WTC11 (cell line): ENCODE measurements at regions of chr2 and their contacts with region 1.

Region 1: GRCh38 chr2:200585730-200586643 is at the start of gene AOX1:
- DNase-seq: peak; percentile 77
- ATAC-seq: peak; percentile 86
- H3K4me3 Mint-ChIP-seq: peak within 1 kb of the TSS; percentile 83
- H3K27ac Mint-ChIP-seq: peak within 1 kb of the TSS; percentile 74; the same call in 1 of the 2 replicates
- H3K4me1 Mint-ChIP-seq: peaks cover 10% of the 10 kb centered on the region
- H3K27me3 Mint-ChIP-seq: peaks cover 24% of the 10 kb centered on the region
- CTCF ChIP-seq: no peak
- total RNA-seq, gene AOX1: 3.6 to 5.4 TPM (median 4.8 TPM) in 3 replicates

Region 2: GRCh38 chr2:200442471-200442870 is 143.5 kb before region 1 on chr2:
- CTCF ChIA-PET with region 1: no interaction called
- POLR2A ChIA-PET with region 1: no interaction called
- DNase-seq: no peak
- ATAC-seq: no peak
- H3K4me3 Mint-ChIP-seq: no peak overlapping the region
- H3K27ac Mint-ChIP-seq: no peak overlapping the region
- H3K4me1 Mint-ChIP-seq: no peaks in the 10 kb centered on the region
- H3K27me3 Mint-ChIP-seq: no peaks in the 10 kb centered on the region
- CTCF ChIP-seq: no peak

Region 3: DNA sequence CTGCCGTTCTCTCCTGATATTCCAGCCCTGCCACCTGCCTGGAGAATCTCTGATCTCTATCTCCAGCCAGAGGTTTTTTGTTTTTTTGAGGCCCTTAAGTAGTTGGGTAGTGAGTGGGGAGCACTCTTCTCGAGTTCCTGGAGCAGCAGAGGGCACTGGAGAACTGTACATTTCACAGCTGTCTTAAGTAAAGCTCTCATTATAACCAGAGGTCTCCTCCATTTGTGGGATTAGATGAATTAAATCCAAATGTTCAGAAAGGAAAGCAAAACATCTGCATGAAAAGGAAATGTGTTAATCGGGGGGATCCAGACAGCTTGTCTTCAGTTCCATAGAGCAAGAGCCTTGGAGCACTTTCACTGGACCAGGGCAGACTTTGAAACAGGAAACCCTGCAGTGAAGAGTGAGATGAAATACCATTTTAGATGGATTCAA is 32.6 kb after region 1 on chr2:
- CTCF ChIA-PET with region 1: interaction called, 10 read pairs
- POLR2A ChIA-PET with region 1: no interaction called
- DNase-seq: no peak
- ATAC-seq: peak; percentile 24; the same call in 1 of the 2 replicates
- H3K4me3 Mint-ChIP-seq: no peak overlapping the region
- H3K27ac Mint-ChIP-seq: no peak overlapping the region
- H3K4me1 Mint-ChIP-seq: no peaks in the 10 kb centered on the region
- H3K27me3 Mint-ChIP-seq: no peaks in the 10 kb centered on the region; the same call in 1 of the 2 replicates
- CTCF ChIP-seq: no peak